GM10248 (cell line): ENCODE measurements at regions of chr9 and their contacts with region 1.

Region 1: GRCh38 chr9:35051069-35051967 is 21.1 kb downstream of the VCP start:
- DNase-seq: peak; percentile 61
- CTCF ChIP-seq: peak; percentile 65

Region 2: GRCh38 chr9:34927061-34927460 is 124.3 kb before region 1 on chr9:
- CTCF ChIA-PET with region 1: no interaction called
- POLR2A ChIA-PET with region 1: no interaction called
- DNase-seq: no peak
- CTCF ChIP-seq: no peak

Region 3: GRCh38 chr9:34989003-34989945 is 62.0 kb before region 1 on chr9 and contains the start of gene DNAJB5:
- CTCF ChIA-PET with region 1: interaction called, 48 read pairs
- POLR2A ChIA-PET with region 1: no interaction called
- DNase-seq: peak; percentile 97
- CTCF ChIP-seq: no peak

Region 4: GRCh38 chr9:35033101-35033500 is 18.2 kb before region 1 on chr9:
- CTCF ChIA-PET with region 1: interaction called, 17 read pairs
- POLR2A ChIA-PET with region 1: no interaction called
- DNase-seq: no peak
- CTCF ChIP-seq: no peak

Region 5: GRCh38 chr9:35079426-35080341 is 28.4 kb after region 1 on chr9 and contains the start of gene FANCG:
- CTCF ChIA-PET with region 1: interaction called, 28 read pairs
- POLR2A ChIA-PET with region 1: interaction called, 3 read pairs
- DNase-seq: peak; percentile 94
- CTCF ChIP-seq: no peak

Region 6: GRCh38 chr9:35102926-35103659 is 51.8 kb after region 1 on chr9 and contains the start of gene STOML2:
- CTCF ChIA-PET with region 1: interaction called, 12 read pairs
- POLR2A ChIA-PET with region 1: no interaction called
- DNase-seq: peak; percentile 95
- CTCF ChIP-seq: no peak